BJ (cell line): ENCODE measurements at regions of chr11 and their contacts with region 1.

Region 1: DNA sequence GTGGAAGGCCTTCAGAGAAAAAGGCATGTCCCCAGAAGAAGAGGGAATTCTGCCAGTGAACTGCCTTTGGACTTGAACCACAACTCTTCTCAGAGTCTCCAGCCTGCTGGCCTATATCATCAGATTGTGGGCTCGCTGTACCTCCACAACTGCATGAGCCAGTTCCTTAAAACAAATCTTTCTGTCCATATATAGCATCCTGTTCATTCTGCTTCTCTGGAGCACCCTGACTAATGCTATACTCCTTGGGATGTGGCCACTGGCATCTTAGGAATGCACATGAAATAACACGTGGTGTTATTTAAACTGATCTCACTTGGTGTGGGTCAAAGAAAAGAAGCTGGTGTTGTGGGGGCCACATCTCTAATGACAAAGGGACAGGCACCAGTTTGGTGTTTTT is 58.3 kb upstream of the VSTM5 start:
- DNase-seq: peak; percentile 45
- H3K4me3 ChIP-seq: no peak overlapping the region
- H3K27me3 ChIP-seq: no peaks in the 10 kb centered on the region
- CTCF ChIP-seq: no peak

Region 2: GRCh38 chr11:93921695-93922468 is 13.2 kb after region 1 on chr11:
- CTCF ChIA-PET with region 1: interaction called, 14 read pairs
- POLR2A ChIA-PET with region 1: no interaction called
- DNase-seq: no peak
- H3K4me3 ChIP-seq: no peak overlapping the region
- H3K27me3 ChIP-seq: peaks cover 5% of the 10 kb centered on the region
- CTCF ChIP-seq: peak; percentile 83

Region 3: GRCh38 chr11:93939084-93939760 is 30.5 kb after region 1 on chr11:
- CTCF ChIA-PET with region 1: no interaction called
- POLR2A ChIA-PET with region 1: no interaction called
- DNase-seq: no peak
- H3K4me3 ChIP-seq: no peak overlapping the region
- H3K27me3 ChIP-seq: peaks cover 3% of the 10 kb centered on the region; the same call in 1 of the 2 replicates
- CTCF ChIP-seq: no peak

Region 4: DNA sequence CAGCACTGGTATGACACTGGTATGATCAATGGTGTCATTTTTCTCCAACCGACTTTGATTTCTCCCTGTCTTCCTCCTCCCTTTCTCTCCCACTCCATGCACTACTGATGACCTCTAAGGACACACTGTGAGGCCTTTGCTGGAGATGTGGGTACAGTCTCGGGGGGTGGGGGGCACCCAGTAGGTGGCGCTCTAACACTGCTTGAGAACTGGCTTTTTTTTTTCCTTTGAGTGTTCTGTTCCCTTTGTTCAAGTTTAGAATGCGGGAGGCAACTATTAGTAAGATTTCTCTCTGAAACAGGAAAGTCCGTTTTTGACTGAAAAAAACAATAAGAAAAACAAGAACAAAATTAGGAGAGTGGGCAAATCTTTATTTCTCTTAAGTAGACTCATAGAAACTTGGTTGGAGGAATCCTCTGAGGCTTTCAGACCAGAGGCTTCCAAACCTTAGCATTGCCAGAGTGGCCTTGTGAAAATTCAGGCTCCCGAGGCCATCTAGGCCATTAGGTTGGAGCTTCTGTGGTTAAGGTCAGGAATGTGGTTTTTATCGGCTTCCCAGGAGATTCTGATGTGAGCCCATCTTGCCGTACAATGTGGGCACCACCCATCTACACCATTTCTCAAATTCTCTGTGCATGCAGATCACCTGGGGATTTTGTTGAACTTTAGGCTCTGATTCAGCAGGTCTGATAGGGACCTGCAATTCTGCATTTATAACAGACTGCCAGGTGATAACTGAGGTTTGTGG is 263.2 kb after region 1 on chr11:
- CTCF ChIA-PET with region 1: interaction called, 10 read pairs
- POLR2A ChIA-PET with region 1: no interaction called
- DNase-seq: no peak
- H3K4me3 ChIP-seq: no peak overlapping the region
- H3K27me3 ChIP-seq: no peaks in the 10 kb centered on the region
- CTCF ChIP-seq: peak; percentile 91